CD4-positive, alpha-beta memory T cell (primary cell): ENCODE measurements at regions of chr14 and their contacts with region 1.

Region 1: DNA sequence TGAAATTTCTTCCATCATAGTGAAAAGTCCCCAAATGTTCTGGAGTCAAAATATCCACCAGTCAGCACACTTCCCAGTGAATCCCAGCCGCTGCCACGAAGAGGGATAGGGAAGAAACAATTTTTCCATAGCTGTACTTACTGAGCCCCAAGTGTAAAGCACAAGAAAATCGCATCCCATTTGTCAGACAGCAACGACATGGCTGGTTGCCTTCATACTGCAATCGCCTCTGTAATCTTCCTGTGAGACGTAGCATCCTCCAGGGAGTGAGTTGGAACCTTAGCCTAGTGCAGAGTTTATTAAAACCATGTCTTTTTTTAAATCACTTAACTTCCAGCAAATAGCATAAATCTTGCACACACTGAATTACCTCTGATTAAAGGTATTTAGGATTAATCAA is 56.8 kb downstream of the GNG2 start:
- DNase-seq: no peak
- H3K4me3 ChIP-seq: no peak overlapping the region
- H3K4me3 Mint-ChIP-seq: no peak overlapping the region
- H3K27ac ChIP-seq: no peak overlapping the region
- H3K27ac Mint-ChIP-seq: peak overlapping the region in 5 of 7 donors; percentile 7 to 74 (median 29)
- H3K4me1 ChIP-seq: peaks cover 36% of the 10 kb centered on the region
- H3K4me1 Mint-ChIP-seq: peaks cover 56 to 79% (median 66%) of the 10 kb centered on the region in 4 donors
- H3K27me3 ChIP-seq: no peaks in the 10 kb centered on the region
- H3K27me3 Mint-ChIP-seq: no peaks in the 10 kb centered on the region

Region 2: DNA sequence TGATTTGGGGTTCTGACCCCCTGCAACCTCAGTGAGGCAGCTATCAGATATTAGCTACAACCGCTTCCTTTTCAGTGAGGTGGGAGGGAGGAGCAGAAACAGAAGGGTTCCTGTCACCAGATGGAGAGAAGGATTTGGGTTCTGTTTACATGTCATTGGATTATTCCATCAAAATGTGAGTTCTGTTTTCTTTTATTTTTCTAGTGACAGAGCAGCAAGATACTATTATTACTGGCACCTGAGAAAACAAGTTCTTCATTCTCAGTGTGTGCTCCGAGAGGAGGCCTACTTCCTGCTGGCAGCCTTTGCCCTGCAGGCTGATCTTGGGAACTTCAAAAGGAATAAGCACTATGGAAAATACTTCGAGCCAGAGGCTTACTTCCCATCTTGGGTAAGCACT is 212.6 kb before region 1 on chr14:
- CTCF ChIA-PET with region 1: no interaction called
- POLR2A ChIA-PET with region 1: no interaction called
- intact Hi-C with region 1: no loop called
- DNase-seq: no peak
- H3K4me3 ChIP-seq: no peak overlapping the region
- H3K4me3 Mint-ChIP-seq: no peak overlapping the region
- H3K27ac ChIP-seq: no peak overlapping the region
- H3K27ac Mint-ChIP-seq: no peak overlapping the region
- H3K4me1 ChIP-seq: no peaks in the 10 kb centered on the region
- H3K4me1 Mint-ChIP-seq: no peaks in the 10 kb centered on the region
- H3K27me3 ChIP-seq: no peaks in the 10 kb centered on the region
- H3K27me3 Mint-ChIP-seq: no peaks in the 10 kb centered on the region

Region 3: GRCh38 chr14:51884086-51884927 is 32.9 kb before region 1 on chr14:
- CTCF ChIA-PET with region 1: interaction called, 6 read pairs
- POLR2A ChIA-PET with region 1: interaction called, 3 read pairs
- intact Hi-C with region 1: loop called (anchors 5 kb)
- DNase-seq: no peak
- H3K4me3 ChIP-seq: no peak overlapping the region
- H3K4me3 Mint-ChIP-seq: peak overlapping the region; percentile 26 to 86 (median 52)
- H3K27ac ChIP-seq: peak overlapping the region; percentile 12
- H3K27ac Mint-ChIP-seq: peak overlapping the region; percentile 43 to 83 (median 78)
- H3K4me1 ChIP-seq: peaks cover 89% of the 10 kb centered on the region
- H3K4me1 Mint-ChIP-seq: peaks cover 49 to 89% (median 73%) of the 10 kb centered on the region in 4 donors
- H3K27me3 ChIP-seq: no peaks in the 10 kb centered on the region
- H3K27me3 Mint-ChIP-seq: no peaks in the 10 kb centered on the region

Region 4: DNA sequence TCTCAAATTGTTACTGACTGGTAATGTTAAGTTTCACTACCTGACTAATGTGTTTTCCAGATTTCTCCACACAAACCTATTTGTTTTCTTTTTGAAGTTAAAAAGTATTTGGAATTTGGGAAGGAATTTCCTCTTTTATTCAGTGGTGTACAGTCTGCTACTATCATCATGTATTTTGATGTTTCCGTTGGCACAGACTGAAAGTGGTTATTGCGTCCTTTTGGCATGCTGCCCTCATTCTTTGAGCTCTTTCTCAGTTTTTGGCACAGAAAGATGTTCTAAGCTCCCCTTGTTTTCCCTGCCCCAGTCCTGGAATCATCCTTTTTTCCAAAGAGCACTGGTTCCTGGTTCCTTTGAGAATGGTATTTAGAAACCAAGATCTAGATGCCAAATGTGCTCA is 40.8 kb after region 1 on chr14:
- CTCF ChIA-PET with region 1: no interaction called
- POLR2A ChIA-PET with region 1: no interaction called
- intact Hi-C with region 1: loop called (anchors 5 kb)
- DNase-seq: no peak
- H3K4me3 ChIP-seq: no peak overlapping the region
- H3K4me3 Mint-ChIP-seq: no peak overlapping the region
- H3K27ac ChIP-seq: no peak overlapping the region
- H3K27ac Mint-ChIP-seq: peak overlapping the region in 2 of 7 donors; percentile 5 to 43
- H3K4me1 ChIP-seq: peaks cover 23% of the 10 kb centered on the region
- H3K4me1 Mint-ChIP-seq: peaks cover 37 to 67% (median 51%) of the 10 kb centered on the region in 4 donors
- H3K27me3 ChIP-seq: no peaks in the 10 kb centered on the region
- H3K27me3 Mint-ChIP-seq: no peaks in the 10 kb centered on the region